ENCODE measurements at regions of chr14 and their contacts with region 1.

Region 1: DNA sequence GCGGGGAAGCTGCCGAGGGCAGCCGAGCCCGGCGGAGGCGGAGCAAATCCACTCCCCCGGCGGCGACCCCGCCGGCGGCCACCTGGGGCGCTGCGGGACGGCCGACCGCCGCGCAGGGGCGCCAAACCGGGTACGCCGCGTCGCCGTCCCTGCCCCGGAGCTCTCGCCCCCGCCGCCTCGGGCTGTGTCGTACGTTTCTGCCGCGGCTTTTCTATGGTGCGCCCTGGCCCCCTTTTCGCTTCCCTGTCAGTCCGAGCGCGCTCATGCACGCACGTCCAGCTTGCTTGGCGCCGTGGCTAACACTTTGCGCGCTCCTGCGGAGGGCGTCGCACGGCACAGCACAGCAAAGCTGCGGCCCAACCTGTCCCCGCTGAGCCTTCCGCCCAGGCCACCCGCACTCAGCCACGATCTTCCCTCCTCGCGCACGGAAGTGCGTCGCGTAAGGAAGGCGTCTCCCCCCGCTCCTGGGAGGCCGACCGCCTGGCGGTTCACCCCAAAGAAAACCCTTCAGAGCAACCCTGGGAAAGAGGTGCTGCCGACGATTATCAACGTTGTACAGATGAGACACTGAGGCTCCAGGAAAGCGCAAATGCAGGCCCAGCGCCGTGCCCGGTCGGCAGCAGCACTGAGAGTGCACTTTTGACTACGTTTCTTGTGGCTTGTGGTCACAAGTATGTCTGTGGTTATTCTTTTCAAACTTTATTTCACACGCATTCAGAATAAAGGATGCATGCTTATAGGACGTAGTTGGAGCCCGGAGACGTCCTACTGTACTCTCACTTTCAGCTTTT is at the start of gene HECTD1:
- DNase-seq: peak; percentile 84 to 94 (median 92)
- ATAC-seq: peak; percentile 81 to 96 (median 94)
- H3K4me3 ChIP-seq: peak within 1 kb of the TSS; percentile 74 to 97 (median 84)
- H3K27ac ChIP-seq: peak within 1 kb of the TSS; percentile 92 to 100 (median 98)
- H3K4me1 ChIP-seq: peaks cover 6 to 35% (median 22%) of the 10 kb centered on the region in 12 donors
- H3K27me3 ChIP-seq: no peaks in the 10 kb centered on the region
- CTCF ChIP-seq: peak; percentile 42 to 97 (median 93)
- POLR2A ChIP-seq: peak in 1 of 2 donors; percentile 40
- total RNA-seq, gene HECTD1: 122 to 185 (median 158) TPM

Region 2: DNA sequence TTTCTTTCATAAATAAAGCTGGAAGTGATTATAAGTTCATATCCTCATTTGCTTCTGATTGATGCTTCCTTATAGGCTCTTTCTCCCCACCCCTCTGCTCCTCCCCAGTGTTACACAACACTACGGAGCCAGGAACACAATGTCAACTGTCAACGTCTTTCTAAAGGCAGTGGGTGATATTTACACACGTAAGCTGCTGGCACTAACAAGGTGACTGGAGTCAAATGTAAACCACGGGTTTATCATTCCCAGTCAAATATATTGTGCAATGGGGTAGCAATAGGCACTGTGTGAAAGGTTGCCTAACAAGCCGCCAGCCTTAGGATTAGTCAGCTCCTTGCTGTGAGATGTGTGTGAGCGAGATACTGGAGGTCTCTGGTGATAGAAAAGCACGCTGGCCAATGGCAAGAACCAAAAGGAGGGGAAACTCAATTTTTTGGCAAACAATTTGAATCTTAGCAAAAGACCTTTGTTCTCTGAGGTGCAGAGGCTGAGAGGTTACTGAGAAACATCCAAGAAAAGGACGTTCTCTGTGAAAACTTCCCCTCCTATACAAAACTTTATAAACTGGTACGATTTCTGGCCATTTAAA is 21.8 kb after region 1 on chr14:
- intact Hi-C with region 1: loop called in 1 of 10 experiments (anchors 2 kb)
- DNase-seq: peak in 4 of 5 donors; percentile 19 to 87 (median 52)
- ATAC-seq: peak; percentile 96 to 100 (median 98)
- H3K4me3 ChIP-seq: peak overlapping the region in 8 of 12 donors; percentile 20 to 46 (median 31)
- H3K27ac ChIP-seq: peak overlapping the region in 11 of 12 donors; percentile 10 to 79 (median 57)
- H3K4me1 ChIP-seq: peaks cover 0 to 17% (median 3%) of the 10 kb centered on the region in 12 donors
- H3K27me3 ChIP-seq: no peaks in the 10 kb centered on the region
- CTCF ChIP-seq: no peak
- POLR2A ChIP-seq: no peak

Region 3: DNA sequence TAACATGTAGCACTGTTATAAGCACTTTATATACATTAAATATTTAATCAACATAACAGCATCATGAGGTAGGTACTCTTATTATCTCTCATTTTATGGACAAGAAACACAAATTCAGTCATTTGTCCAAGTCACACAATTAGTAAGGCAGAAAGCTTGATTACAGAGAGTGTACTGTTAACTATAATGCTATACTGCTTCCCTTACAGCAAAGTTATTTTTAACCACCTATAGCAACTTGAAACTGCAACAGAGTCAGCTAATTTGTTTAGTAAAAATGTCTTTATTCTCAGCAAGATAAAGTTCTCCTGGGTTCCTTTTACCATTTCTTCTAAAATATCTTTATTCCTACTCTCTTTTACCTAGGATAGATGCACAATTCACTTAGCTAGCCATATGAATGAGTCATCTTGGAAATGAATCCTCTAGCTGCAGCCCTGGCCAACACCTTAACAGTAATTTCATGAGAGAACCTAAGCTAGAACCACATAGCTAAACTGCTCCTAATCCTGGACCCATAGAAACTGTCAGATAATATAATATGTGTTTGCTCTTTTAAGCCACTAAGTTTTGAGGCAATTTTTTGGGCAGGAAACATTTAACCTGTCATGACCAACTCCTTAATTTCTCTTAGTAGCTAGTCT is 89.9 kb after region 1 on chr14:
- intact Hi-C with region 1: loop called in 3 of 10 experiments (anchors 5 to 10 kb)
- DNase-seq: no peak
- ATAC-seq: no peak
- H3K4me3 ChIP-seq: no peak overlapping the region
- H3K27ac ChIP-seq: no peak overlapping the region
- H3K4me1 ChIP-seq: no peaks in the 10 kb centered on the region
- H3K27me3 ChIP-seq: no peaks in the 10 kb centered on the region
- CTCF ChIP-seq: no peak
- POLR2A ChIP-seq: no peak

Region 4: DNA sequence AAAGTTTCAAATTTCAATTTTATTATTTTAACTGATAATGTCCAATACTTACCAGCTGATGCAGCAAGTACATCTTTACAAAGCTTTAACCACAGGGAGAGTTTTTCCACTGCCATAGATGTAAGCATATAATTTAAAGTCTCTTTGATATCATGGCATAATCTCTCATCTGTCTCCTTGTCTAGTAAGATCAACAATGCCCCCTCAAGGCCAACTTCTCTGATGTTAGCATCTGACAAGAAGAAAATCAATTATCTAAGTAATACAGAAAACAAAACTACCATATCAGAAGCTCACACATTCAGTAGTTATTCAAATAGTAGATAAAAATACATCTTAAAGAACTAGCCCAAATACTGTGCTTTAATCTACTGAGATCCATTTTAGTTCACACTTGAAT is 118.2 kb after region 1 on chr14:
- intact Hi-C with region 1: loop called in 4 of 10 experiments (anchors 5 to 10 kb)
- DNase-seq: no peak
- ATAC-seq: no peak
- H3K4me3 ChIP-seq: no peak overlapping the region
- H3K27ac ChIP-seq: no peak overlapping the region
- H3K4me1 ChIP-seq: no peaks in the 10 kb centered on the region
- H3K27me3 ChIP-seq: no peaks in the 10 kb centered on the region
- CTCF ChIP-seq: no peak
- POLR2A ChIP-seq: no peak

Region 5: DNA sequence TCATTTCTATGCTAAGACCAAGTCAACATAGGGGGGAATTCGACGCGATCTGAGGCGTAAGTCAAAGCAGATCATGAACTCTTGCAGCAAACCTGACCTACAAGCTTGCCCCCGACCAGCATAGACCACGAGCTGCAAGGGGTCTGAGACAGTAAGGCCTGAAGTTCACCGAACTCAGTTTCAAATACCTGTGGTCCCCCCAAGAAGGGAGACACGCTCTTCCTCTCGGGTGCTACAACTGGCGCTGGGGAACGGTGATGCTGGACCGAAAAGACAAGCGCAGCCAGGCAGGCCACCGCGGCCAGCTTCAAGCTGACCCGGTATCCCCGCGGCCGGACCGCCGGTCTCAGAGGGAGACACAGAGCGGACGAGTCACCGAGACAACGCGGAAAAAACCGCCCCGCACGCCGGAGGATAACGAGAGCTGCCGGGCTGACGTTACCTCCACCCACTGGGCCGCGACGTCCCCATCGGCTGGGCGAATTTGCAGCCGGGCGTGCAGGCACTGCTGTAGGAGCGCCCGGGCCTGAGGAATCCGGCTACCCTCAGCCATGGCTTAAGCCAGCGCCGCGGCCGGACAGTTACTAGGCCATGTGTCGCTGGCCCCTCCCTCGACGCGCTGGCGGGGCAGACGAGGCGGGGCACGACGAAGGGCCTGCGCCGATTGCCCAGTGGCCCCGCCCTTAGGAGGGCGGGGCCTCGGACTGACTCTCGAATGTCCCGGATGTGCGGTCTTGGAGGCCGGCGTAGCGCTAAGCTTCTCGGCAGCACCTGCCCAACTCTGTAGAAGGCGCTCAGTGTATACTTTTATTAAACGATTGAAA is 249.1 kb after region 1 on chr14 and contains the start of gene DTD2:
- intact Hi-C with region 1: loop called in 1 of 10 experiments (anchors 5 kb)
- DNase-seq: peak; percentile 95 to 97 (median 96)
- ATAC-seq: peak; percentile 100
- H3K4me3 ChIP-seq: peak within 1 kb of the TSS; percentile 50 to 86 (median 70)
- H3K27ac ChIP-seq: peak within 1 kb of the TSS; percentile 70 to 97 (median 89)
- H3K4me1 ChIP-seq: peaks cover 0 to 41% (median 11%) of the 10 kb centered on the region in 12 donors
- H3K27me3 ChIP-seq: no peaks in the 10 kb centered on the region
- CTCF ChIP-seq: peak in 3 of 12 donors; percentile 8 to 23 (median 8)
- POLR2A ChIP-seq: peak in 1 of 2 donors; percentile 93
- total RNA-seq, gene DTD2: 5.4 to 12.2 (median 8.2) TPM

Measured in heart left ventricle (tissue), 16 donors.